ENCODE measurements at regions of chr22 and their contacts with region 1.

Region 1: GRCh38 chr22:46798366-46799350 is 36.2 kb downstream of the TBC1D22A start:
- DNase-seq: peak in 1 of 2 donors; percentile 92
- H3K4me3 ChIP-seq: no peak overlapping the region
- CTCF ChIP-seq: peak in 1 of 3 donors; percentile 59
- POLR2A ChIP-seq: no peak

Region 2: GRCh38 chr22:46563381-46564083 is 235.1 kb before region 1 on chr22:
- intact Hi-C with region 1: loop called (anchors 10 kb)
- DNase-seq: peak in 1 of 2 donors; percentile 71
- H3K4me3 ChIP-seq: no peak overlapping the region
- CTCF ChIP-seq: peak in 1 of 3 donors; percentile 67
- POLR2A ChIP-seq: no peak

Measured in lower leg skin (tissue), 4 donors.